ENCODE measurements at regions of chr3 and their contacts with region 1.

Region 1: GRCh38 chr3:111859974-111860859 is 1.2 kb downstream of the PHLDB2 start:
- DNase-seq: peak; percentile 82
- H3K4me3 ChIP-seq: peak overlapping the region; percentile 86 to 91 (median 86)
- H3K27ac ChIP-seq: peak overlapping the region; percentile 97
- H3K4me1 ChIP-seq: peaks cover 38% of the 10 kb centered on the region
- H3K27me3 ChIP-seq: no peaks in the 10 kb centered on the region
- CTCF ChIP-seq: peak; percentile 34 to 61

Region 2: DNA sequence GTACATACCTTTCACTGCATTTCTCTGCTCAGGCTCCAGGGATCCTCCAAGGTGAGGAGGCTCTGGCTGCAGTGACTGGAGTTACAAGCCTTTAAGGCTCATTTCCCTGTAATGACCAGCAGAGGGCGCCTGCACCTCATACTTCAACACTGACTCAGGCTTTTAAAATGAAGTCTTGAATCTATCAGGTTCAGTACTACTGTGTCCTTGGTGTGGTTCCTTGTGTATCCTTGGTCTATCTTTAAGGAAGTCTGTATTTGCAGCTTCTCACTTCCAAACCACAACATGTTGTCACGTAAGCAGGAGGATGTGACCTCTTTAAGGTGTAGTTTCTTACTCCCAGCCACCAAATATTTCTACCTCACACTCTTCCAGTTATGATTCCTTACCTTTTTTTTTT is 142.6 kb before region 1 on chr3:
- CTCF ChIA-PET with region 1: interaction called, 35 read pairs
- dilution Hi-C with region 1: no loop called
- in situ Hi-C with region 1: loop called (anchors 5 kb)
- intact Hi-C with region 1: loop called (anchors 1 kb)
- DNase-seq: peak; percentile 88
- H3K4me3 ChIP-seq: no peak overlapping the region
- H3K27ac ChIP-seq: peak overlapping the region; percentile 33
- H3K4me1 ChIP-seq: peaks cover 18% of the 10 kb centered on the region
- H3K27me3 ChIP-seq: no peaks in the 10 kb centered on the region
- CTCF ChIP-seq: peak; percentile 90 to 92

Region 3: GRCh38 chr3:111737706-111738086 is 122.5 kb before region 1 on chr3:
- CTCF ChIA-PET with region 1: interaction called, 4 read pairs
- dilution Hi-C with region 1: no loop called
- in situ Hi-C with region 1: no loop called
- intact Hi-C with region 1: loop called (anchors 1 kb)
- DNase-seq: peak; percentile 90
- H3K4me3 ChIP-seq: no peak overlapping the region
- H3K27ac ChIP-seq: peak overlapping the region; percentile 97
- H3K4me1 ChIP-seq: peaks cover 72% of the 10 kb centered on the region
- H3K27me3 ChIP-seq: no peaks in the 10 kb centered on the region
- CTCF ChIP-seq: no peak

Region 4: GRCh38 chr3:111803123-111803593 is 57.1 kb before region 1 on chr3:
- CTCF ChIA-PET with region 1: interaction called, 10 read pairs
- dilution Hi-C with region 1: no loop called
- in situ Hi-C with region 1: loop called in 1 of 2 experiments (anchors 5 kb)
- intact Hi-C with region 1: loop called (anchors 1 kb)
- DNase-seq: peak; percentile 96
- H3K4me3 ChIP-seq: peak overlapping the region in 1 of 3 experiments; percentile 4
- H3K27ac ChIP-seq: peak overlapping the region; percentile 100
- H3K4me1 ChIP-seq: peaks cover 40% of the 10 kb centered on the region
- H3K27me3 ChIP-seq: no peaks in the 10 kb centered on the region
- CTCF ChIP-seq: no peak

Region 5: DNA sequence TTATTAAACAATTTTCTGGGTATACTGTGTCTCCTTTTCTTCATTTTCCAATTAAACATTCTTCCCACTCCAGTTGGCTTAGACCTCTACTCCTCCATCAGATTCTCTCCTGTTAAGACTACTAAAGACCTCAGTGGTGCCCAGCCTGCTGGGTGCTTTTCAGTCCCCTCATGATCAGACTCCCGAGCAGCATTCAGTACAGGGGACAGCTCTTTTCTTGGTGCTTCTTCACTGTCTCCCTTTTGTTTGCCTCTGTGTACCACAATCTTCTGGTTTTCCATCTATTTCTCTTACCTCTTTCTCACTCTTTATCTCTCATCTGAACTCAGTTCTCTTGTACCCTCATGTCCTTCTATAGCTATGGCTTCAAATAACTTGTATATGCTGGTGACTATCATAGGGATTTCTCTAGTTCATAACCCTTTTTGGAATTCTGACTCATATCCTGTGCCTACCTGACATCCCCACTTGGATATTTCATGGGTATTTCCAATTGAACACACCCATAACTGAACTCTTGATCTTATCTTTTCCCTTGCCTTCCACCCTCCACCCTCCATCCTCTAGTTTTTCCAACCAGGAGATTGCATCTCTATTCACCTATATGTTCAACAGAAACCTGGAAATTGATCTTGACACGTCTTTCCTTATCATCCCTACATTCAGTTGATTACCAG is 63.0 kb after region 1 on chr3:
- CTCF ChIA-PET with region 1: no interaction called
- dilution Hi-C with region 1: no loop called
- in situ Hi-C with region 1: no loop called
- intact Hi-C with region 1: loop called (anchors 2 kb)
- DNase-seq: peak; percentile 87
- H3K4me3 ChIP-seq: no peak overlapping the region
- H3K27ac ChIP-seq: peak overlapping the region; percentile 94
- H3K4me1 ChIP-seq: peaks cover 26% of the 10 kb centered on the region
- H3K27me3 ChIP-seq: no peaks in the 10 kb centered on the region
- CTCF ChIP-seq: no peak

Region 6: GRCh38 chr3:111947231-111947630 is 87.0 kb after region 1 on chr3:
- CTCF ChIA-PET with region 1: no interaction called
- dilution Hi-C with region 1: no loop called
- in situ Hi-C with region 1: no loop called
- intact Hi-C with region 1: no loop called
- DNase-seq: peak; percentile 20
- H3K4me3 ChIP-seq: no peak overlapping the region
- H3K27ac ChIP-seq: no peak overlapping the region
- H3K4me1 ChIP-seq: peaks cover 6% of the 10 kb centered on the region
- H3K27me3 ChIP-seq: no peaks in the 10 kb centered on the region
- CTCF ChIP-seq: no peak

Region 7: GRCh38 chr3:112043603-112044201 is 183.5 kb after region 1 on chr3:
- CTCF ChIA-PET with region 1: no interaction called
- dilution Hi-C with region 1: no loop called
- in situ Hi-C with region 1: no loop called
- intact Hi-C with region 1: loop called (anchors 10 kb)
- DNase-seq: peak; percentile 58
- H3K4me3 ChIP-seq: no peak overlapping the region
- H3K27ac ChIP-seq: peak overlapping the region; percentile 17
- H3K4me1 ChIP-seq: no peaks in the 10 kb centered on the region
- H3K27me3 ChIP-seq: no peaks in the 10 kb centered on the region
- CTCF ChIP-seq: peak; percentile 85